Activated naive CD8-positive, alpha-beta T cell treated with anti-CD3 and anti-CD28 coated beads, Interleukin-2, amount 10 ng/mL, durations not matched to agents 7 days and 5 days (primary cell): ENCODE measurements at regions of chr2 and their contacts with region 1.

Region 1: DNA sequence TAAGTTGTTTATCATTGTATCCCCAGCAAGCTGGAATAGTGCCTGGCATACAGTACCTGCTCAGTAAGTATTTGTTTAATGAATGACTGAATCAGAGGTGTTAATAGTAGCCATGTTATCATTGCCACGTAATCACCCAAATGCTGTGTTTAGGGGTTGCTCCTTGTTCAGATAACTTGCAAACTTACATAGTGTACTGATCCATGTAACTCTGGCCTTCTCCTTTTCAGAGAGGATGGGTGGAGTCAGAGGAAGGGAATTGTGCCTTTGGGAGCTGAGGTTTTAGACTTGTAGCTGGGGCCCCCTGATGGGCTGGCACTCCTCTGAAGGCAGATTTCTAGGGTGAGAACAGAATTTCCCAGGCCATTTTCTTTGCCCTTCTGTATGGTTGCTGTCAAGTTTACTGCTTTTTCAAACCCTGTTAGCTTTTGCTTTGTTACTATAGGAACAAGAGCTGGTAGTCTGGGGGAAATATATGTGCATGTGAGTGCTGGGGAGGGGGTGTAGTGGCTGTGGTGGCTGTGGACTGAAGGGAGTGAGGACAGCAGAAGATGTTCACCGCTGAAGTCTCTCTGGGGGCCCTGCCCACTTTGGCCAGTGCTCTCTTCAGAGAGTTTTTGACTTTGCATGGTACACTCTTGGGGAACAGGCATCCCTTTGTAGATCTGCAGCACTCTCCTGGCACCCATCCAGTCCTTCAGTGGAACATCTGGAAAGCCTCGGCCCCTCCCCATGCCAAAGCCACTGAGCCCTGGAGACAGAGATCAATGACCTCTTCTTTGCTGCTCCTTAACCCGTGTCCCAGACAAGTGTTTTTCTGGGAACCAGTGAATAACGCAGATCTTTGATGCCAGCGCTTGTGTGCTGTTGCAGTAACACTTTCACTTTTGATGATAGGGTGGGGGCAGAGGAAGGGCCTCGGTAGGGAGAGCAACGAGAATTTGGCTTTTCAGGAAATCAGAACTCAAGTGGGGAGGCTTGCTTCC is 209.0 kb downstream of the PRKCE start:
- DNase-seq: peak; percentile 59
- ATAC-seq: peak; percentile 61
- H3K4me3 Mint-ChIP-seq: peak overlapping the region; percentile 85
- H3K27ac Mint-ChIP-seq: peak overlapping the region; percentile 92
- H3K4me1 Mint-ChIP-seq: peaks cover 51% of the 10 kb centered on the region
- H3K27me3 Mint-ChIP-seq: no peaks in the 10 kb centered on the region

Region 2: DNA sequence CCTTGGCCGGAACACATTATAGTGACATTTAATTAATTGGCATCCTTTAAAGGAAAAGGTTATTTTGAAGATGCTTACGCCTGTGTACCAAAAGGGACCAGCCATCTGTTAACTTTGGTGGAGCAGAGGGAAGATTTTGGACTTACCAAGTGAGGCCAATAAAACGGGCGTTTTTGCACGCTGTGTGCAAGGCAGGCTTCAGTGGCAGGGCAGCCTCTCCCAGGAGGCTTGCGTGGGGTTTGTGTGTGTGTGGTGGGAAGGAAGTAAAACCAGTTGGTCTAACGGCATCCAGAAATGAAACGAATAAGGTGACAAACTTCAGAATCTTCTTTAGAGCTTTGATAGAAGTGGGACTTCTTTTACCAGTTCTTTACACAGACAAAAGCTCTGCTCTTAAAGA is 17.3 kb before region 1 on chr2:
- POLR2A ChIA-PET with region 1: interaction called, 10 read pairs
- DNase-seq: no peak
- ATAC-seq: peak; percentile 72
- H3K4me3 Mint-ChIP-seq: peak overlapping the region; percentile 64
- H3K27ac Mint-ChIP-seq: peak overlapping the region; percentile 86
- H3K4me1 Mint-ChIP-seq: peaks cover 59% of the 10 kb centered on the region
- H3K27me3 Mint-ChIP-seq: no peaks in the 10 kb centered on the region

Region 3: GRCh38 chr2:45879406-45879805 is 19.0 kb after region 1 on chr2:
- POLR2A ChIA-PET with region 1: no interaction called
- DNase-seq: no peak
- ATAC-seq: no peak
- H3K4me3 Mint-ChIP-seq: no peak overlapping the region
- H3K27ac Mint-ChIP-seq: no peak overlapping the region
- H3K4me1 Mint-ChIP-seq: no peaks in the 10 kb centered on the region
- H3K27me3 Mint-ChIP-seq: no peaks in the 10 kb centered on the region

Region 4: GRCh38 chr2:46062637-46063412 is 202.4 kb after region 1 on chr2:
- POLR2A ChIA-PET with region 1: no interaction called
- DNase-seq: peak; percentile 52
- ATAC-seq: peak; percentile 47
- H3K4me3 Mint-ChIP-seq: no peak overlapping the region
- H3K27ac Mint-ChIP-seq: no peak overlapping the region
- H3K4me1 Mint-ChIP-seq: peaks cover 7% of the 10 kb centered on the region
- H3K27me3 Mint-ChIP-seq: peaks cover 4% of the 10 kb centered on the region